Natural killer cell (primary cell): ENCODE measurements at regions of chr2 and their contacts with region 1.

Region 1: DNA sequence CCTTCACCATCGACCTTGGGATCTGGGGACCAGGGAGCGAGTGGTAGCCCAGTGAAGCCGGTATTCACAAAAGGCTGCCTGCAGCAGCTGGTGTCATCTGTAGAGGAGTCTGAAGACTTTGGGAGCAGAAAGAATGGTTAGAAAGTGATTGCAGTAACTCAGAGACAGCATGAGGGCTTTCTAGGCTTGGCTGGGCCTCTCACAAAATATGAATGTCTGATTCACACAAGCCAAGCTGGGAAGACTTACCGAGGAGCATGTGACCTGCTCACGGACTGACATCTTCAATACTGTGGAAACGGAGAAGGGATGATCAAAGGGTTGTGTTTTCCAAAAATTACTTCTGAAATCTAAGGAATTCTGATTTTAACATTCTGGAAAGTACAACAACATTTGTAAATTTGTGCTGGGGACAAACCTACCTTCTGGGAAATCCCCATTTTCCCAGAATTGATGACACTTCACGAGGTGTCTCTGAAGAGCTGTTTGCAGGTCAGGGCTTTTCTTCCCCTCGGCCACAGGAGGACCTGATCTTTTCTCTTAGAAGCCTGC is 111.7 kb downstream of the ACOXL start:
- DNase-seq: no peak
- ATAC-seq: no peak
- H3K4me3 ChIP-seq: no peak overlapping the region
- H3K4me3 Mint-ChIP-seq: no peak overlapping the region
- H3K27ac ChIP-seq: no peak overlapping the region
- H3K27ac Mint-ChIP-seq: no peak overlapping the region
- H3K4me1 ChIP-seq: peaks cover 70% of the 10 kb centered on the region
- H3K4me1 Mint-ChIP-seq: peaks cover 76 to 87% of the 10 kb centered on the region in 2 donors
- H3K27me3 ChIP-seq: no peaks in the 10 kb centered on the region
- H3K27me3 Mint-ChIP-seq: peaks cover 26 to 29% of the 10 kb centered on the region in 2 donors
- CTCF ChIP-seq: no peak

Region 2: GRCh38 chr2:110677530-110678456 is 166.2 kb before region 1 on chr2 and contains the start of gene BUB1:
- intact Hi-C with region 1: loop called (anchors 1 kb)
- DNase-seq: peak; percentile 94 to 98
- ATAC-seq: peak; percentile 75 to 86 (median 77)
- H3K4me3 ChIP-seq: peak within 1 kb of the TSS; percentile 71
- H3K4me3 Mint-ChIP-seq: peak within 1 kb of the TSS; percentile 98
- H3K27ac ChIP-seq: peak within 1 kb of the TSS; percentile 67
- H3K27ac Mint-ChIP-seq: peak within 1 kb of the TSS; percentile 93 to 95
- H3K4me1 ChIP-seq: peaks cover 25% of the 10 kb centered on the region
- H3K4me1 Mint-ChIP-seq: peaks cover 36 to 40% of the 10 kb centered on the region in 2 donors
- H3K27me3 ChIP-seq: no peaks in the 10 kb centered on the region
- H3K27me3 Mint-ChIP-seq: peaks cover 15 to 21% of the 10 kb centered on the region in 2 donors
- CTCF ChIP-seq: no peak
- total RNA-seq, gene BUB1: 2.3 to 4.2 (median 2.7) TPM

Region 3: GRCh38 chr2:110788976-110789375 is 55.1 kb before region 1 on chr2:
- intact Hi-C with region 1: no loop called
- DNase-seq: no peak
- ATAC-seq: no peak
- H3K4me3 ChIP-seq: no peak overlapping the region
- H3K4me3 Mint-ChIP-seq: no peak overlapping the region
- H3K27ac ChIP-seq: no peak overlapping the region
- H3K27ac Mint-ChIP-seq: no peak overlapping the region
- H3K4me1 ChIP-seq: peaks cover 3% of the 10 kb centered on the region
- H3K4me1 Mint-ChIP-seq: no peaks in the 10 kb centered on the region
- H3K27me3 ChIP-seq: no peaks in the 10 kb centered on the region
- H3K27me3 Mint-ChIP-seq: peaks cover 25 to 52% of the 10 kb centered on the region in 2 donors
- CTCF ChIP-seq: no peak

Region 4: GRCh38 chr2:110804915-110805314 is 39.1 kb before region 1 on chr2:
- intact Hi-C with region 1: loop called (anchors 1 kb)
- DNase-seq: peak; percentile 44 to 77
- ATAC-seq: peak; percentile 84 to 92 (median 91)
- H3K4me3 ChIP-seq: no peak overlapping the region
- H3K4me3 Mint-ChIP-seq: peak overlapping the region; percentile 73
- H3K27ac ChIP-seq: no peak overlapping the region
- H3K27ac Mint-ChIP-seq: peak overlapping the region; percentile 71 to 76
- H3K4me1 ChIP-seq: peaks cover 22% of the 10 kb centered on the region
- H3K4me1 Mint-ChIP-seq: peaks cover 31 to 38% of the 10 kb centered on the region in 2 donors
- H3K27me3 ChIP-seq: no peaks in the 10 kb centered on the region
- H3K27me3 Mint-ChIP-seq: peaks cover 4 to 6% of the 10 kb centered on the region in 2 donors
- CTCF ChIP-seq: no peak

Region 5: GRCh38 chr2:111049792-111050640 is 206.0 kb after region 1 on chr2:
- intact Hi-C with region 1: loop called (anchors 2 kb)
- DNase-seq: peak in 1 of 2 donors; percentile 14
- ATAC-seq: peak in 2 of 3 donors; percentile 38 to 53
- H3K4me3 ChIP-seq: no peak overlapping the region
- H3K4me3 Mint-ChIP-seq: peak overlapping the region; percentile 55
- H3K27ac ChIP-seq: peak overlapping the region; percentile 16
- H3K27ac Mint-ChIP-seq: peak overlapping the region; percentile 37 to 66
- H3K4me1 ChIP-seq: peaks cover 44% of the 10 kb centered on the region
- H3K4me1 Mint-ChIP-seq: peaks cover 34 to 50% of the 10 kb centered on the region in 2 donors
- H3K27me3 ChIP-seq: no peaks in the 10 kb centered on the region
- H3K27me3 Mint-ChIP-seq: peaks cover 7 to 11% of the 10 kb centered on the region in 2 donors
- CTCF ChIP-seq: no peak